Tibial artery (tissue), 4 donors: ENCODE measurements at regions of chr7 and their contacts with region 1.

Region 1: GRCh38 chr7:30422922-30423321 is 55.7 kb downstream of the NOD1 start:
- DNase-seq: no peak
- H3K4me3 ChIP-seq: no peak overlapping the region
- H3K27ac ChIP-seq: no peak overlapping the region
- H3K4me1 ChIP-seq: no peaks in the 10 kb centered on the region
- H3K27me3 ChIP-seq: no peaks in the 10 kb centered on the region
- CTCF ChIP-seq: no peak

Region 2: GRCh38 chr7:30504347-30505173 is 81.6 kb after region 1 on chr7 and contains the start of gene GGCT:
- intact Hi-C with region 1: loop called (anchors 10 kb)
- DNase-seq: peak; percentile 100
- H3K4me3 ChIP-seq: peak within 1 kb of the TSS; percentile 68 to 82
- H3K27ac ChIP-seq: peak within 1 kb of the TSS; percentile 94 to 98
- H3K4me1 ChIP-seq: peaks cover 0 to 25% (median 13%) of the 10 kb centered on the region in 4 donors
- H3K27me3 ChIP-seq: no peaks in the 10 kb centered on the region
- CTCF ChIP-seq: no peak

Region 3: DNA sequence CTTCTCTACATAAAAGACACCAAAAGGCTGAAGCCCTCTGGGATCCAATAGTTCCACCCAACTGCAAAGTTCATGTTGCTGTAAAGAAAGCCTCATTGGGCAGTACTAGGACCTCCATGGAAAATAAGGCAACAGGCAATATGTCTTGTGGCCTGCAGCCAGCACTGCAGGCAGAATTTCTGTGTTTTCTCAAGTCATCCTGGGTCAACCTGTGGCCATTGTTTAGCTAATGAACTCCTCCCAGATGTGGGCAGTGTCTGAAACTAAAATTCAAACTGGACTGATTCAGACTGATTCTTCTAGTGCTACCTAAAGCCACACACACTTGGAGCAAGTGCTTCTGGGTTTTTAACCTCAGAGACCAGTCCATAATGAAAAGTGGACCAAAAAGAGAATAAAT is 1405.6 kb after region 1 on chr7:
- intact Hi-C with region 1: no loop called
- DNase-seq: no peak
- H3K4me3 ChIP-seq: no peak overlapping the region
- H3K27ac ChIP-seq: no peak overlapping the region
- H3K4me1 ChIP-seq: no peaks in the 10 kb centered on the region
- H3K27me3 ChIP-seq: no peaks in the 10 kb centered on the region
- CTCF ChIP-seq: no peak